ENCODE measurements at regions of chr3 and their contacts with region 1.

Region 1: GRCh38 chr3:11779626-11780025 is 67.1 kb downstream of the TAMM41 start:
- DNase-seq: no peak
- H3K4me3 ChIP-seq: no peak overlapping the region
- H3K27ac ChIP-seq: no peak overlapping the region
- H3K4me1 ChIP-seq: peaks cover 3% of the 10 kb centered on the region
- H3K27me3 ChIP-seq: no peaks in the 10 kb centered on the region
- CTCF ChIP-seq: no peak

Region 2: DNA sequence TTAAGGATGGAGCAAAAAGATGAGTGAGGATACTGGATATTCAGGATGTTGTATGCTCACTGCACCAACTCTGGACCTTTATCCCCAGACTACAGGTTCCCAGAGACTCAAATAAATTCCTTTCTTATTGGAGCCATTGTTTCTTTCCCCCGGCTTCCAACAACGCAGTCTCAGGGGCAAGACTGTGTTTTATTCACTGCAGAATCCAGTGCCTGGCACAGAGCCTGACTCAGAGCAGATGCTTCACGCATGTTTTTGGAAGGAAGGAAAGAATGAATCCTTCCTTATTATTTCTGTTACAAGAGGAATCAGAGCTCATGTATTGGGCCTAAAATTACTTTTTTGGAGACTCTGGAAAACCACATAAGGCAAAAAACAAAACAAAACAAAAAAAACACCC is 39.9 kb before region 1 on chr3:
- CTCF ChIA-PET with region 1: no interaction called
- dilution Hi-C with region 1: loop called (anchors 5 kb)
- in situ Hi-C with region 1: no loop called
- intact Hi-C with region 1: no loop called
- DNase-seq: no peak
- H3K4me3 ChIP-seq: no peak overlapping the region
- H3K27ac ChIP-seq: no peak overlapping the region
- H3K4me1 ChIP-seq: no peaks in the 10 kb centered on the region
- H3K27me3 ChIP-seq: no peaks in the 10 kb centered on the region
- CTCF ChIP-seq: no peak